Mucosa of descending colon (tissue), 3 donors: ENCODE measurements at regions of chrX and their contacts with region 1.

Region 1: GRCh38 chrX:20527558-20528011 is 260.9 kb upstream of the RPS6KA3 start:
- DNase-seq: no peak
- ATAC-seq: peak; percentile 73
- H3K4me3 ChIP-seq: no peak overlapping the region
- H3K4me1 ChIP-seq: no peaks in the 10 kb centered on the region
- CTCF ChIP-seq: no peak

Region 2: DNA sequence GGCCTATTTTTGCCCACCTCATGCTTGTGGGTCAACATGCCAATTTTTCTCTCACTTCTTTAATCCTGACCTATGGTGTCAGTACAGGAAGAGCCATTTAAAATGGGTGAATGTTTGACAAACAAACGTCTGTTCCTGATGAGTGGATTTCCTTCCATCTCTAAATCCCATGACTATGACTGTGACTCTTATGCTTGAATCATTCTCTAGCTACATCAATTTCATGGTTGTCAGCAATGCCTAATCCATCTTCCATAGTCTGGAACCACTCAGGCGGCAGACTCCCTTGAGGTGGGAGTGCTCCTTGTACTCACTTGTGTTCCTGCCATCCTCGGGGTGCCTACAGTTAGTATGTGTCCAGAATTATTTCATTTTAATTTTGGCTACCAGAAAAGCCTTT is 66.0 kb before region 1 on chrX:
- intact Hi-C with region 1: no loop called
- DNase-seq: no peak
- ATAC-seq: no peak
- H3K4me3 ChIP-seq: no peak overlapping the region
- H3K4me1 ChIP-seq: no peaks in the 10 kb centered on the region
- CTCF ChIP-seq: no peak

Region 3: DNA sequence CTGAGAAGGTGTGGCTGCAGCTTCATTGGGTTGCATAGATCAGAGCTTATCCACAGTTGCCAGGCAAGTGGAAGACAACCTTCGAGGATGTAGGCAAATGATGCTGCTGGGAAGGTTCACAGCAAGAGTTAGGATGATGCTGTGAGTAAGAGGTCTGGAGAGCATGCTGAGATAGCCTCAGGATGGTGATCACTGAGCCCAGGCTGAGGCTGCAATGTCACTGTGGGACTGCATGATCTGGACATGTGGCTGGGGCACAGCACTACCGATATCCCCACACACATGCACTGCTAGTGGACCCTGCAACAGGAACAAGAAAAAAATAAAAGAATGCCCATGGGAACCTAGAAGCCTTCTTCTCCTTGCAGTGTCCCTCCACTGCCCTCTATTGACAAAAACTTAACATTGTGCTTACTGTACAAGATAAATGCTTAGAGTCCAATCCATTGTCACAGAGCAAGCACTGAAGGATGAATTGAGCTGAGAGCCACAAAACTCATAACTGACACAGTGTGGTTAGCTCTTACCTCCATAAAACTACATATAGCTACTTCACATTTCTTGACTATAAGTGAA is 952.2 kb after region 1 on chrX:
- intact Hi-C with region 1: loop called in 1 of 2 experiments (anchors 5 kb)
- DNase-seq: peak in 1 of 3 donors; percentile 4
- ATAC-seq: peak; percentile 65
- H3K4me3 ChIP-seq: no peak overlapping the region
- H3K4me1 ChIP-seq: no peaks in the 10 kb centered on the region
- CTCF ChIP-seq: peak; percentile 13